B cell (primary cell): ENCODE measurements at regions of chrX and their contacts with region 1.

Region 1: GRCh38 chrX:100636321-100636991 is at the start of gene TSPAN6:
- DNase-seq: peak; percentile 71
- ATAC-seq: peak; percentile 97
- H3K4me3 ChIP-seq: peak within 1 kb of the TSS in 4 of 5 experiments; percentile 19 to 47 (median 35)
- H3K4me3 Mint-ChIP-seq: peak within 1 kb of the TSS; percentile 96
- H3K27ac ChIP-seq: no peak within 1 kb of the TSS
- H3K27ac Mint-ChIP-seq: no peak within 1 kb of the TSS
- H3K4me1 ChIP-seq: peaks cover 6% of the 10 kb centered on the region in 2 donors
- H3K4me1 Mint-ChIP-seq: peaks cover 8% of the 10 kb centered on the region
- H3K27me3 ChIP-seq: peaks cover 0 to 20% (median 12%) of the 10 kb centered on the region in 4 experiments
- H3K27me3 Mint-ChIP-seq: peaks cover 19% of the 10 kb centered on the region
- CTCF ChIP-seq: peak; percentile 54
- total RNA-seq, gene TSPAN6: not detected in 2 replicates

Region 2: DNA sequence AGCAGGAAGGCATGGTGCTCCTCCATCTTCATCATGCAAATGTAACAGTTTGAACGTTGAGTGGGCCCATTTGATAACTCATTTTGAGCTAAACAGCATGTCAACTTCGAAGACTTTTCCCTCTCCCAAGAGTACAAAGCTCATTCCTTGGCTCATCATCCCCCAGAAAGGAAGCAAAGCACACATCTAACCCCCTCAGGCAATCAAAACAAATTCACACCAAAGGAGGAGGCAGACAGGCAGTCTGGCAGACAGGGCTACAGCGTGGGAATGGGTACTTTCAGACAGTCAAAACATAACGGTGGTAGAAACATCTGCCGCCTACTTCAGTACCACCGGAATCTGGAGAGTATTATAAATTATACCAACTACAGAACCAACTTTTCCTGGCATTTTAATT is 308.1 kb before region 1 on chrX:
- CTCF ChIA-PET with region 1: no interaction called
- POLR2A ChIA-PET with region 1: no interaction called
- intact Hi-C with region 1: no loop called
- DNase-seq: no peak
- ATAC-seq: no peak
- H3K4me3 ChIP-seq: no peak overlapping the region
- H3K4me3 Mint-ChIP-seq: no peak overlapping the region
- H3K27ac ChIP-seq: no peak overlapping the region
- H3K27ac Mint-ChIP-seq: no peak overlapping the region
- H3K4me1 ChIP-seq: no peaks in the 10 kb centered on the region
- H3K4me1 Mint-ChIP-seq: no peaks in the 10 kb centered on the region
- H3K27me3 ChIP-seq: no peaks in the 10 kb centered on the region
- H3K27me3 Mint-ChIP-seq: no peaks in the 10 kb centered on the region
- CTCF ChIP-seq: no peak

Region 3: DNA sequence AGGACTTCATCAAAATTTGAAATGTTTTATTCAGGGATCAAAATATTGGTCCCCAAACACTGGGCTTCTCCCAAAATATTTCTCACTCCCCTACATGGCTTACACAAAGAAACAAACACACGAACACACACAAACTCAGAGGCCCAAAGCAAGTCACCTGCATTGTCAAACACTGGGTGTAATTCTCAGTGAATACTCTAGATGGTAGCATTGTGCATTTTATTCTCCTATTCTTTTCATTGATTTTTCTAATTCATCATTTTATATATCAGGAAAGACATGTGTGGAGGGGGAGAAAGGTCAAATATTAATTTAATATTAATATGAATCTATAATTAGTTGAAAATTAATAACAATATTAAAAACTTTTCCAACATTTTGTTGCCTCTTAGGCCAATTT is 124.0 kb before region 1 on chrX:
- CTCF ChIA-PET with region 1: interaction called, 20 read pairs
- POLR2A ChIA-PET with region 1: no interaction called
- intact Hi-C with region 1: loop called (anchors 1 kb)
- DNase-seq: peak; percentile 31
- ATAC-seq: no peak
- H3K4me3 ChIP-seq: no peak overlapping the region
- H3K4me3 Mint-ChIP-seq: no peak overlapping the region
- H3K27ac ChIP-seq: no peak overlapping the region
- H3K27ac Mint-ChIP-seq: no peak overlapping the region
- H3K4me1 ChIP-seq: no peaks in the 10 kb centered on the region
- H3K4me1 Mint-ChIP-seq: no peaks in the 10 kb centered on the region
- H3K27me3 ChIP-seq: no peaks in the 10 kb centered on the region
- H3K27me3 Mint-ChIP-seq: peaks cover 3% of the 10 kb centered on the region
- CTCF ChIP-seq: peak; percentile 82

Region 4: DNA sequence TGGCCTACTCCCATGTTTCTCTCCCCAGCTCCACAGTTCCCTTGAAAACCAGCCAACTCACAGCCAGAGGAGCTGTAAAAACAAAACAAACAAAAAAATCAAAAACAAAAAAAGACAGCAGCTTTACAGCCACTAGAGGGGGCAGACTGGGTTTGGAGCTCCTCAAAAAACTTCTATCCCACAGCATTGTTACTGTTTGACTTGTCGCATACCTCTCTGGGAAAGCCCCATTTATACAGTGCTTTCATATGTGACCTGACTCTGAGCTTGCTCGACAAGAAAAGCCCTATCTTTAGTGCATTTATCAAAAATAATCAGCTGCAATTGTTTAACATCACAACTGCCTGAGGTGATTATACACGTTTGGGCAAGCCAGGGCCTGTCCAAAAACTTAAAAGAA is 21.5 kb before region 1 on chrX:
- CTCF ChIA-PET with region 1: interaction called, 22 read pairs
- POLR2A ChIA-PET with region 1: no interaction called
- intact Hi-C with region 1: loop called (anchors 1 kb)
- DNase-seq: peak; percentile 39
- ATAC-seq: peak; percentile 62
- H3K4me3 ChIP-seq: no peak overlapping the region
- H3K4me3 Mint-ChIP-seq: no peak overlapping the region
- H3K27ac ChIP-seq: no peak overlapping the region
- H3K27ac Mint-ChIP-seq: no peak overlapping the region
- H3K4me1 ChIP-seq: peaks cover 4 to 7% of the 10 kb centered on the region in 2 donors
- H3K4me1 Mint-ChIP-seq: peaks cover 4% of the 10 kb centered on the region
- H3K27me3 ChIP-seq: peaks cover 0 to 3% (median under 1%) of the 10 kb centered on the region in 4 experiments
- H3K27me3 Mint-ChIP-seq: peaks cover 28% of the 10 kb centered on the region
- CTCF ChIP-seq: peak; percentile 43

Region 5: DNA sequence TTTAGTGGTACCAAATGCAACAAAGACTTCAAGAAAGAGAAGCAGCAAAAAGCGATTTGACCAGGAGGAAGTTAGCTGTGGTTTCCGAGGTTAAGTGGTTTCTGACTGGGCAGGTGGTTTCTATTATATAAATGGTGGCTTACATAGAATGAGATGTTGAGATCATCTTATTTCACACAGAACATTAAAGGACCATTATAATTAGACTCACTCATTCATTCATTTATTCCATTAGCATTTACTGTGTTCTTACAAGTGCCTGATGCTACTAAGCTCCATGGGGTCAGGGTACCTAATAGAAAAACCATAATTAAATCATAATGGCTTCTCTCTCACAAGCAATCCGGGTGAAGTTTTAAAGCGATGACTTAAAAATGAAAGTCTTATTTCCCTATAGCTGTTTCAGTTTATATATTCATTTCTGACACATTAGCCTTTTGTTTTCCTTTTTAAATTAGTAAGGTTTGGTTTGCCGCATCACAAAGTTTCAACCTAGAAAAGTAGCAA is 10.4 kb before region 1 on chrX:
- CTCF ChIA-PET with region 1: interaction called, 11 read pairs
- POLR2A ChIA-PET with region 1: no interaction called
- intact Hi-C with region 1: no loop called
- DNase-seq: peak; percentile 67
- ATAC-seq: peak; percentile 41
- H3K4me3 ChIP-seq: peak overlapping the region in 1 of 5 experiments; percentile 4
- H3K4me3 Mint-ChIP-seq: peak overlapping the region; percentile 81
- H3K27ac ChIP-seq: no peak overlapping the region
- H3K27ac Mint-ChIP-seq: no peak overlapping the region
- H3K4me1 ChIP-seq: peaks cover 12 to 14% of the 10 kb centered on the region in 2 donors
- H3K4me1 Mint-ChIP-seq: peaks cover 12% of the 10 kb centered on the region
- H3K27me3 ChIP-seq: peaks cover 0 to 2% (median 0%) of the 10 kb centered on the region in 4 experiments
- H3K27me3 Mint-ChIP-seq: no peaks in the 10 kb centered on the region
- CTCF ChIP-seq: no peak